Natural killer cell (primary cell): ENCODE measurements at regions of chr4 and their contacts with region 1.

Region 1: GRCh38 chr4:36255577-36255976 is 11.3 kb upstream of the ARAP2 start:
- DNase-seq: peak; percentile 52 to 92
- ATAC-seq: peak; percentile 77 to 91 (median 90)
- H3K4me3 ChIP-seq: no peak overlapping the region
- H3K4me3 Mint-ChIP-seq: peak overlapping the region; percentile 87
- H3K27ac ChIP-seq: peak overlapping the region; percentile 74
- H3K27ac Mint-ChIP-seq: peak overlapping the region; percentile 83 to 94
- H3K4me1 ChIP-seq: peaks cover 23% of the 10 kb centered on the region
- H3K4me1 Mint-ChIP-seq: peaks cover 53 to 63% of the 10 kb centered on the region in 2 donors
- H3K27me3 ChIP-seq: no peaks in the 10 kb centered on the region
- H3K27me3 Mint-ChIP-seq: no peaks in the 10 kb centered on the region
- CTCF ChIP-seq: no peak

Region 2: GRCh38 chr4:36269101-36269500 is 13.5 kb after region 1 on chr4:
- intact Hi-C with region 1: loop called (anchors 2 kb)
- DNase-seq: peak; percentile 35 to 87
- ATAC-seq: peak; percentile 94 to 99 (median 97)
- H3K4me3 ChIP-seq: no peak overlapping the region
- H3K4me3 Mint-ChIP-seq: peak overlapping the region; percentile 54
- H3K27ac ChIP-seq: peak overlapping the region; percentile 87
- H3K27ac Mint-ChIP-seq: peak overlapping the region; percentile 94 to 95
- H3K4me1 ChIP-seq: peaks cover 2% of the 10 kb centered on the region
- H3K4me1 Mint-ChIP-seq: peaks cover 32 to 34% of the 10 kb centered on the region in 2 donors
- H3K27me3 ChIP-seq: no peaks in the 10 kb centered on the region
- H3K27me3 Mint-ChIP-seq: no peaks in the 10 kb centered on the region
- CTCF ChIP-seq: no peak

Region 3: GRCh38 chr4:37225778-37226177 is 970.2 kb after region 1 on chr4:
- intact Hi-C with region 1: no loop called
- DNase-seq: no peak
- ATAC-seq: no peak
- H3K4me3 ChIP-seq: no peak overlapping the region
- H3K4me3 Mint-ChIP-seq: no peak overlapping the region
- H3K27ac ChIP-seq: no peak overlapping the region
- H3K27ac Mint-ChIP-seq: no peak overlapping the region
- H3K4me1 ChIP-seq: no peaks in the 10 kb centered on the region
- H3K4me1 Mint-ChIP-seq: no peaks in the 10 kb centered on the region
- H3K27me3 ChIP-seq: no peaks in the 10 kb centered on the region
- H3K27me3 Mint-ChIP-seq: no peaks in the 10 kb centered on the region
- CTCF ChIP-seq: no peak

Region 4: GRCh38 chr4:37268319-37268718 is 1012.7 kb after region 1 on chr4:
- intact Hi-C with region 1: no loop called
- DNase-seq: no peak
- ATAC-seq: no peak
- H3K4me3 ChIP-seq: no peak overlapping the region
- H3K4me3 Mint-ChIP-seq: no peak overlapping the region
- H3K27ac ChIP-seq: no peak overlapping the region
- H3K27ac Mint-ChIP-seq: no peak overlapping the region
- H3K4me1 ChIP-seq: no peaks in the 10 kb centered on the region
- H3K4me1 Mint-ChIP-seq: no peaks in the 10 kb centered on the region
- H3K27me3 ChIP-seq: no peaks in the 10 kb centered on the region
- H3K27me3 Mint-ChIP-seq: no peaks in the 10 kb centered on the region
- CTCF ChIP-seq: no peak

Region 5: DNA sequence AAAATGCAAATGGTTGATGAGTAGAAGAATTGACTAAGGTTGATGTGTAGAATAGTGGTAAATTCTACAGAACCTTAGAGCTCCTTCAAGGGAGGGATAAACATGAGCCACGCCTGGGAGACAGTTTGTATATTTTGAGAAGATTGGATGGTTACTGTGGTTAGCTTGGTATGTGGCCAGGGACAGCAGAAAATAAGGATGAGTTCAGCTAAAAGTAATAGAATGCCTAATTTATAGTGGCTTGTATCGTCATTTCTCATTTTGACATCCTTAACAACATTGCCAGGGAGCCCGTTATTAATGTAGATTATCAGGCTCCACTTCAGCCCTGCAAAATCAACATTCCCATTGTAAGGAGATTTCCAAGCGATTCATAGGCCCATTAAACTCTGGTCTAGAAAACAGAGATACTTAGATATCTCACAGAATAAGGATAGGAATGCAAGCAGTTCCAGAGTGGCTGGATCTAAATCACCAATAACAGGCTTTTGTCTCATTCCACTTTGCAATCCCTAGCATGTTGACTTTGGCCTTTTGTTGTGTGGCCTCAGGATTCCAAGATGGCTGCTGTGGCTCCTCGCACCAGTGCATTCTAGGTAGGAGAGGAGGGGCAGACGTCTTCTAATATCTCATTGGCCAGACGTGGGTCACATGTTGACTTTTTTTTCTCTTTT is 1698.2 kb after region 1 on chr4:
- intact Hi-C with region 1: no loop called
- DNase-seq: no peak
- ATAC-seq: no peak
- H3K4me3 ChIP-seq: no peak overlapping the region
- H3K4me3 Mint-ChIP-seq: no peak overlapping the region
- H3K27ac ChIP-seq: no peak overlapping the region
- H3K27ac Mint-ChIP-seq: no peak overlapping the region
- H3K4me1 ChIP-seq: no peaks in the 10 kb centered on the region
- H3K4me1 Mint-ChIP-seq: peaks cover 21 to 25% of the 10 kb centered on the region in 2 donors
- H3K27me3 ChIP-seq: no peaks in the 10 kb centered on the region
- H3K27me3 Mint-ChIP-seq: no peaks in the 10 kb centered on the region
- CTCF ChIP-seq: no peak